Activated T-helper 1 cell treated with anti-CD3 and anti-CD28 coated beads, Interleukin-12 subunit alpha, Interleukin-12 subunit beta, Interleukin-2, Interleukin-4 antibody, amounts not matched to agents 30 ng/mL and 10 ng/mL and 1 ng/mL, durations not matched to agents 14 hours and 24 hours and 36 hours (primary cell): ENCODE measurements at regions of chr10 and their contacts with region 1.

Region 1: GRCh38 chr10:122648599-122649428 is 50.8 kb downstream of the C10orf120 start:
- DNase-seq: no peak
- H3K4me3 Mint-ChIP-seq: no peak overlapping the region
- H3K27ac Mint-ChIP-seq: no peak overlapping the region
- H3K4me1 Mint-ChIP-seq: no peaks in the 10 kb centered on the region
- H3K27me3 Mint-ChIP-seq: peaks cover 11% of the 10 kb centered on the region

Region 2: DNA sequence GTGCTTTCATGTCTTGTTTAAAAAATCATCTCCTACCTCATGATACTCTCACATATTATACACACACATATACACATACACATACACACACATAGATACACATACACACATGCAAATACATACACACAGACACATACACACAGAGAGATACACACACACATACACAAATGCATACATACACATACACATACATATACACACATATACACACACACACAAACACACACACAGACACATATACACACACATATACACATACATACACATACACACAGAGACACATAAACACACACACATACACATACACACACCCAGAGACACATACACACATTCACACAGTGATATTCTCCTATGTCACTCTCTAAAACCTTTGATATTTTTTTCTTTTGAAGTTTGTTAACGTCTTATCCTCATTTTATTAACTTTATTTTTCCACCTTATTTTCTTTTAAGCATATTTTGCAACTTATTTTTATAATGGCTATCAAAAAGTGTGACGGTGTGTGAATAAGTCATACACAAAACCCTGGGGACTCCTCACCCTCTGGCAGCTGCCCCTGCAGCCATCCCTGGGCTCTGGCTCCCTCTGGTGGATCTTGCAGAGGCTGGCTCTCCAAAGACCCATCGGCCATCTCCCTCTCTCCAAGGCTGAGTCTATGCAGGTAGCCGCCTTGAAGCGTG is 54.8 kb after region 1 on chr10:
- intact Hi-C with region 1: loop called (anchors 1 kb)
- DNase-seq: peak; percentile 4
- H3K4me3 Mint-ChIP-seq: no peak overlapping the region
- H3K27ac Mint-ChIP-seq: no peak overlapping the region
- H3K4me1 Mint-ChIP-seq: no peaks in the 10 kb centered on the region
- H3K27me3 Mint-ChIP-seq: no peaks in the 10 kb centered on the region

Region 3: DNA sequence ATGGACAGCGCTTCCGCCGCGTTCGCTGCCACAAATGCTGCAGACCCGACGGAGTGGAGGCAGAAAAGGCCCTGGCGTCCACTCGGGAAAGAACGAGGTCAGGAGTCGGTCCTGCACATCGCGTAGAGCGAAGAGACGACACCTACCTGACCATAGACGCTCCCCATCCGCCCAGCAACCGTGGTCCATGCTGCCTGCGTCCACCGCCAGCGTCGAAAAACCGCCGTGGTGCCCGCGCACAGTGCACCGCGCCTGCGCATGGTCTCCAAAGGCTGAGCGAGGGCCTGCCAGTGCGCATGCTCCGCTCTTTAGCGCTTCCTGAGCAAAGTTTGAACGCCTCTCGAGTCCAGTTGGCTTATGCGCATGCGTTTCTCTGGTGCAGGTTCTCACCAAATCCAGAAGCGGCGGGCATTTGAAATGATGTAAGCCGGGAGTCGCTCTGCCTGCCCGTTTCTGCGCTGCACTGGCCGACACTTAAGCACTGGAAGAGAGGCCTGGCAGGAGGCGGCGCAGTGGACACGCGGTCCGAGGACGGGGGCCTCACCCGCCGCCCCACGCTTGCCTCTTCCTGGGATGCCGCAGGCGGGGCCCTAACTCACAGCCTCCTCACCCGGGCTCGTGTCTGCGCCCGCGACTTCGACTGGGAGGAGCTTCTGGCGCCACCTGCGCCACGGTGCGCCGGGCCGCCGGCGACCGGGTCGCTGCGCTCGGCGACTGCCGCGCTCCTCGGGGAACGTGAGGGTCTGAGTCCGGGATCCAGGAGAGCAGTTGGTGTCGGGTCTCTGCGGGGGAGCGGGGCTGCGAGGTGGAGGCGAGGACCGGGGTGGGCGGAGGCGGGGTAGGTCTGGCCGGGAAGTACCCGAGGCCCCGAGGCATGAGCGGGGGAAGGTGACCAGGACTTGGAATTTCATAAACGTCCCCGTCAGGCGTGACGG is 230.8 kb after region 1 on chr10 and contains the start of gene FAM24B:
- intact Hi-C with region 1: no loop called
- DNase-seq: peak; percentile 94
- H3K4me3 Mint-ChIP-seq: peak within 1 kb of the TSS; percentile 97
- H3K27ac Mint-ChIP-seq: peak within 1 kb of the TSS; percentile 93
- H3K4me1 Mint-ChIP-seq: peaks cover 53% of the 10 kb centered on the region
- H3K27me3 Mint-ChIP-seq: no peaks in the 10 kb centered on the region
- total RNA-seq, gene FAM24B: 13.1 and 18.4 TPM in 2 replicates